Gastrocnemius medialis (tissue), 4 donors: ENCODE measurements at regions of chr13 and their contacts with region 1.

Region 1: GRCh38 chr13:110444226-110444653 is 117.3 kb downstream of the RAB20 start:
- DNase-seq: no peak
- ATAC-seq: peak in 1 of 2 donors; percentile 53
- H3K4me3 ChIP-seq: no peak overlapping the region
- H3K27ac ChIP-seq: no peak overlapping the region
- H3K4me1 ChIP-seq: no peaks in the 10 kb centered on the region
- H3K27me3 ChIP-seq: no peaks in the 10 kb centered on the region
- CTCF ChIP-seq: no peak
- POLR2A ChIP-seq: no peak

Region 2: GRCh38 chr13:110216398-110217041 is 227.7 kb before region 1 on chr13:
- in situ Hi-C with region 1: no loop called
- intact Hi-C with region 1: loop called (anchors 5 kb)
- DNase-seq: peak in 1 of 2 donors; percentile 45
- ATAC-seq: peak; percentile 70 to 71
- H3K4me3 ChIP-seq: peak overlapping the region in 1 of 4 donors; percentile 8
- H3K27ac ChIP-seq: peak overlapping the region; percentile 62 to 73 (median 68)
- H3K4me1 ChIP-seq: peaks cover 23 to 31% of the 10 kb centered on the region in 2 donors
- H3K27me3 ChIP-seq: no peaks in the 10 kb centered on the region
- CTCF ChIP-seq: no peak
- POLR2A ChIP-seq: no peak